ENCODE measurements at regions of chr9 and their contacts with region 1.

Region 1: DNA sequence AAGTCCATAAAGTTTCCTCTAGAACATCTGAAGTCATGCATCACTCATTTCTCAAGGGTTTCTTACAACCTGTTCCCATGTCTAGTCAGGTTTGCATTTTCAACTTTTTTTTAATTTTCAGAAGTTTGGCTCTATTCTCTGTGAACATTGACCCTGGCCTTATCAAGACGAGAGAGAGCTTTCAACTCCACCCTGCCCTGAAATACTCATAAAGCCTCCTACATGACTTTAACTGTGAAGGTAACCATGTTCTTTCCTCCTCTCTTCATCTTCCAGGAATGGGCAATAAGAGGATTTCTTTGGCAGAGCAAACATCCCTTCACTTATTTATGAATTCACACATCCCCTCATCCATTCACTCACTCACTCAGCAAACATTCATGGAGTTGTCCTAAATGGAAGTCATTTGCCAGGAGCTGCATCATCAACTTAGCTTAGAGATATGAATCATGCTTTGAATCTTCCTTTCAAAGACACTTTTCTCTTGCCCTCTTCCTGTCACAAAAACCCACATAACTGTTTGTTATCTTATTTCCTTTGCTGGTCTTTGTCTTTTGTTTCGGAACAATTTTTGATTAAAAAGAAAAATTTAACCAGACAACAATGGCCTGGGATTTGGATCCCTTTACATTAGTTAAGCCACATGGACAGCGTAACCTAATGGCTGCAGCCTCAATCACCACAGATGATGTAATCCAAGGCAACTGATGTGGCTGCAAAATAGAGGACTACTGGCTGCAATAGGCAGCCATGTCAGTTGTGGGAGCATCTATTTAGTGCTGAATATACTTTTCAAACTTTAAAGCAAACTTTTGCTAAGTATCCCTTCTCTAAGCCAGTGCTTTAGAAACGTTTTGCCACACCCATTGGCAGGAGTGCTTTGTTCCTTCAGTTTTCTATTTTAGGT is 43.0 kb upstream of the GNAQ start:
- DNase-seq: peak in 7 of 9 donors; percentile 10 to 54 (median 44)
- ATAC-seq: peak; percentile 67
- H3K4me3 ChIP-seq: peak overlapping the region; percentile 25
- H3K4me3 Mint-ChIP-seq: peak overlapping the region; percentile 64 to 84 (median 76)
- H3K27ac ChIP-seq: peak overlapping the region; percentile 57
- H3K27ac Mint-ChIP-seq: peak overlapping the region; percentile 60 to 94 (median 85)
- H3K4me1 ChIP-seq: peaks cover 19 to 24% of the 10 kb centered on the region in 2 donors
- H3K4me1 Mint-ChIP-seq: peaks cover 38 to 60% (median 58%) of the 10 kb centered on the region in 7 donors
- H3K27me3 ChIP-seq: no peaks in the 10 kb centered on the region
- H3K27me3 Mint-ChIP-seq: peaks cover 0 to 5% (median 0%) of the 10 kb centered on the region in 5 donors

Region 2: DNA sequence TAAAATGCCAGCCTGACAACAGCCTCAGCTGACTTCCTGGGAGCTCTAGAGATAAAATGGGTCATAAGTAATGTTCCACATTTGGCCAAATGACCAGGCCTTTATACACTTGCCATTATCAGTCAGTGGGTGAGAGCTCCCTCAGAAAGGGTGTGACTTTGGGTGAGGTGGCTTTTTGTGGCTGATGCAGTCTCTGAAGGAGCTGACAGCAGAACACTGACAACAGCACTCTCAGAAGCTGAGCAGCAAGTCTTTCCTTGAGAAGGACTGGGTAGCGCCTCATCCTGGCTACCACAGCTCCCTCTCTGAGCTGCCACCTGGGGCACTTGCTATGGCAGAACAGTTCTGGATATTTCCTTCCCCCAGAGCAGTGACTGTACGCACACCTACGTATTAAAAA is 21.0 kb before region 1 on chr9:
- CTCF ChIA-PET with region 1: interaction called, 5 read pairs
- POLR2A ChIA-PET with region 1: interaction called, 7 read pairs
- intact Hi-C with region 1: loop called in 1 of 2 experiments (anchors 1 kb)
- DNase-seq: no peak
- ATAC-seq: peak; percentile 31
- H3K4me3 ChIP-seq: no peak overlapping the region
- H3K4me3 Mint-ChIP-seq: peak overlapping the region in 7 of 10 donors; percentile 19 to 69 (median 47)
- H3K27ac ChIP-seq: no peak overlapping the region
- H3K27ac Mint-ChIP-seq: peak overlapping the region in 2 of 9 donors; percentile 7 to 48
- H3K4me1 ChIP-seq: peaks cover 14 to 16% of the 10 kb centered on the region in 2 donors
- H3K4me1 Mint-ChIP-seq: peaks cover 15 to 41% (median 25%) of the 10 kb centered on the region in 7 donors
- H3K27me3 ChIP-seq: no peaks in the 10 kb centered on the region
- H3K27me3 Mint-ChIP-seq: peaks cover 0 to 42% (median 0%) of the 10 kb centered on the region in 5 donors

Region 3: DNA sequence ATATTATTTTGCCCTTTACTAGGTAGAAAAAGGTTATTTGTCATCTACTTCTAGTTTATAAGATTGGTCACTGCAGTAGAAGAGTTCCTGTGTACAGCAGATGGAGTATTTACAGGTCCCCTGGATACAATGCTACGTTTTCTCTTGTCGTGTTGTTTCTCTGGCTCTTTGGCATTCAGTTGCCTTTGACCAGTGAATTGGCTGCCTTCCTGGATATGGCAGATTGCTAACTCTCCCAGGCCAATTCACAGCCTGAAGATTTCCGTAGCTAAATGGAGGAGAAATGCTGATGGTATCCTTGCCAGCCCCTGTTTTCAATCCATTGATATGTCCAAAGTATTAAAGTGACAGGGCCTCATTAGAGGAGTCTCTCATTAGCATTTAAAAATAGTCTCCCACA is 10.6 kb before region 1 on chr9:
- CTCF ChIA-PET with region 1: no interaction called
- POLR2A ChIA-PET with region 1: no interaction called
- intact Hi-C with region 1: loop called in 1 of 2 experiments (anchors 1 kb)
- DNase-seq: no peak
- ATAC-seq: no peak
- H3K4me3 ChIP-seq: no peak overlapping the region
- H3K4me3 Mint-ChIP-seq: no peak overlapping the region
- H3K27ac ChIP-seq: no peak overlapping the region
- H3K27ac Mint-ChIP-seq: no peak overlapping the region
- H3K4me1 ChIP-seq: no peaks in the 10 kb centered on the region
- H3K4me1 Mint-ChIP-seq: peaks cover 0 to 22% (median 3%) of the 10 kb centered on the region in 7 donors
- H3K27me3 ChIP-seq: no peaks in the 10 kb centered on the region
- H3K27me3 Mint-ChIP-seq: peaks cover 0 to 5% (median 0%) of the 10 kb centered on the region in 5 donors

Region 4: DNA sequence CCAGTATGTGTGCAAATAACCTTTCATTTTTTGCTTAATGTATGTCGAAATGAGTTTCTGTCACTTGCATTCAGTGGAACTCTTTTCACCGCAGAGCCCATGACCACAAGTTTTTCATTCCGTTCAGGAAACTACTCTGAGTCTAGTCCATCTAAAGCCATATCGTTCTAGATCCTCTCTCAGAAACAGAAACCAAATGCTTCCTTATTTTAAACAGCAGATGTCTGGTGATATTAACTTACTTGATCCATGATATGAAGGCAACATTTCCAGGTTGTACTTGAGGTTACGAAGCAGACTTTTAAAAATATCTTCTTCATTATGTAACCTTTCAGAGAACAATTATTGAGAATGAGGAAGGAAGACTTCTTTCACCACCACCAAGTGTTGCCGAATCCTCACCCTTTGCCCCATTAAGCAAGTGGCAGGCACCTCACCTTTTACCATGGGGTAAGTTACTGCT is 29.4 kb after region 1 on chr9:
- CTCF ChIA-PET with region 1: no interaction called
- POLR2A ChIA-PET with region 1: no interaction called
- intact Hi-C with region 1: loop called in 1 of 2 experiments (anchors 2 kb)
- DNase-seq: peak in 5 of 9 donors; percentile 17 to 38 (median 23)
- ATAC-seq: peak; percentile 90
- H3K4me3 ChIP-seq: no peak overlapping the region
- H3K4me3 Mint-ChIP-seq: peak overlapping the region in 8 of 10 donors; percentile 46 to 73 (median 60)
- H3K27ac ChIP-seq: no peak overlapping the region
- H3K27ac Mint-ChIP-seq: peak overlapping the region in 6 of 9 donors; percentile 46 to 85 (median 68)
- H3K4me1 ChIP-seq: peaks cover 0 to 7% of the 10 kb centered on the region in 2 donors
- H3K4me1 Mint-ChIP-seq: peaks cover 18 to 54% (median 48%) of the 10 kb centered on the region in 7 donors
- H3K27me3 ChIP-seq: no peaks in the 10 kb centered on the region
- H3K27me3 Mint-ChIP-seq: peaks cover 0 to under 1% (median 0%) of the 10 kb centered on the region in 5 donors